CD8-positive, alpha-beta T cell (primary cell): ENCODE measurements at regions of chr15 and their contacts with region 1.

Region 1: GRCh38 chr15:56491110-56491722 is 26.3 kb upstream of the MNS1 start:
- DNase-seq: peak; percentile 19 to 70 (median 43)
- ATAC-seq: no peak
- H3K4me3 ChIP-seq: no peak overlapping the region
- H3K4me3 Mint-ChIP-seq: no peak overlapping the region
- H3K27ac ChIP-seq: no peak overlapping the region
- H3K27ac Mint-ChIP-seq: no peak overlapping the region
- H3K4me1 ChIP-seq: no peaks in the 10 kb centered on the region
- H3K4me1 Mint-ChIP-seq: no peaks in the 10 kb centered on the region
- H3K27me3 ChIP-seq: peaks cover 0 to 3% of the 10 kb centered on the region in 2 experiments
- H3K27me3 Mint-ChIP-seq: no peaks in the 10 kb centered on the region
- CTCF ChIP-seq: peak; percentile 66

Region 2: GRCh38 chr15:56383010-56383409 is 108.2 kb before region 1 on chr15:
- CTCF ChIA-PET with region 1: no interaction called
- POLR2A ChIA-PET with region 1: no interaction called
- intact Hi-C with region 1: no loop called
- DNase-seq: no peak
- ATAC-seq: no peak
- H3K4me3 ChIP-seq: no peak overlapping the region
- H3K4me3 Mint-ChIP-seq: no peak overlapping the region
- H3K27ac ChIP-seq: no peak overlapping the region
- H3K27ac Mint-ChIP-seq: no peak overlapping the region
- H3K4me1 ChIP-seq: no peaks in the 10 kb centered on the region
- H3K4me1 Mint-ChIP-seq: no peaks in the 10 kb centered on the region
- H3K27me3 ChIP-seq: no peaks in the 10 kb centered on the region
- H3K27me3 Mint-ChIP-seq: no peaks in the 10 kb centered on the region
- CTCF ChIP-seq: no peak

Region 3: GRCh38 chr15:56440214-56440770 is 50.9 kb before region 1 on chr15:
- CTCF ChIA-PET with region 1: no interaction called
- POLR2A ChIA-PET with region 1: no interaction called
- intact Hi-C with region 1: no loop called
- DNase-seq: no peak
- ATAC-seq: no peak
- H3K4me3 ChIP-seq: no peak overlapping the region
- H3K4me3 Mint-ChIP-seq: no peak overlapping the region
- H3K27ac ChIP-seq: no peak overlapping the region
- H3K27ac Mint-ChIP-seq: no peak overlapping the region
- H3K4me1 ChIP-seq: no peaks in the 10 kb centered on the region
- H3K4me1 Mint-ChIP-seq: no peaks in the 10 kb centered on the region
- H3K27me3 ChIP-seq: no peaks in the 10 kb centered on the region
- H3K27me3 Mint-ChIP-seq: peaks cover 3% of the 10 kb centered on the region
- CTCF ChIP-seq: no peak

Region 4: GRCh38 chr15:57079931-57080620 is 588.9 kb after region 1 on chr15:
- CTCF ChIA-PET with region 1: interaction called, 3 read pairs
- POLR2A ChIA-PET with region 1: no interaction called
- intact Hi-C with region 1: loop called in 1 of 2 experiments (anchors 10 kb)
- DNase-seq: peak in 1 of 9 experiments; percentile 14
- ATAC-seq: peak; percentile 42
- H3K4me3 ChIP-seq: no peak overlapping the region
- H3K4me3 Mint-ChIP-seq: no peak overlapping the region
- H3K27ac ChIP-seq: no peak overlapping the region
- H3K27ac Mint-ChIP-seq: no peak overlapping the region
- H3K4me1 ChIP-seq: peaks cover 6% of the 10 kb centered on the region
- H3K4me1 Mint-ChIP-seq: peaks cover 36% of the 10 kb centered on the region
- H3K27me3 ChIP-seq: no peaks in the 10 kb centered on the region
- H3K27me3 Mint-ChIP-seq: no peaks in the 10 kb centered on the region
- CTCF ChIP-seq: no peak